ENCODE measurements at regions of chr1 and their contacts with region 1.

Region 1: GRCh38 chr1:198465201-198466144 is 75.0 kb downstream of the ATP6V1G3 start:
- DNase-seq: peak; percentile 79
- H3K4me3 Mint-ChIP-seq: no peak overlapping the region
- H3K27ac Mint-ChIP-seq: peak overlapping the region; percentile 74
- H3K4me1 Mint-ChIP-seq: peaks cover 32% of the 10 kb centered on the region
- H3K27me3 Mint-ChIP-seq: no peaks in the 10 kb centered on the region
- CTCF ChIP-seq: peak; percentile 84

Region 2: DNA sequence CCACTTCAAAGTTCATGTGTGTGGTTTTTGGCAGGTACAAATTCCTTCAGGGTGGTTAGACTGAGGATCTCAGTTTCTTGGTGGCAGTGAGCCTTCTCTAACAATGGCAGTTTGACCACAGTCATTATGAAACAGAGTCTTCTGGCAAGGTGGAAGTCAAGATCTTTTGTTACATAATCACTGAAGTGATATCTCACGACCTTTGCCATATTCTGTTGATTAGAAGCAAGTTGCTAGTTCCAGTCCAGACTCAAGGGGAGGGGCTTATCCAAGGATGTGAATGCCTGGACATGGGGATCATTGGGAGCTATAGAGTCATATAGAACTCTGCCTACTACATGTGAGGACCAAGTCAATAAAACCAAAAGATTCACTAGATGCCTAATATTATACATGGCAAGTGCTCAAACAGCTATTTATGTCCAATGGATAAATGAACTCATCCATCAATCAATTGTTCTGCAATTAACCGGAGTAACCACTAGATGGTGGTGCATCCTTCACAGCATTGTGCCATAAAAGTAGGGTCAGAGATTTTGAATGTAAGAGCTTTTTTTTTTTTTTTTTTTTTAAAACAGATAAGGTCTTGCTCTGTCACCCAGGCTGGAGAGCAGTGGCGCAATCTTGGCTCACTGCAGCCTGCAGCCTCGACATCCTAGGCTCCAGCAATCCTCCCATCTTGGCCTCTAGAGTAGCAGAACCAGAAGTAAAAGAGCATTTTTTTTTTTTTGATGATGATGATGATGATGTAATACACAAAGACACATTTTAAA is 1065.5 kb before region 1 on chr1:
- CTCF ChIA-PET with region 1: no interaction called
- POLR2A ChIA-PET with region 1: no interaction called
- intact Hi-C with region 1: loop called (anchors 5 kb)
- DNase-seq: peak; percentile 82
- H3K4me3 Mint-ChIP-seq: no peak overlapping the region
- H3K27ac Mint-ChIP-seq: no peak overlapping the region
- H3K4me1 Mint-ChIP-seq: no peaks in the 10 kb centered on the region
- H3K27me3 Mint-ChIP-seq: peaks cover 13% of the 10 kb centered on the region
- CTCF ChIP-seq: peak; percentile 63

Region 3: DNA sequence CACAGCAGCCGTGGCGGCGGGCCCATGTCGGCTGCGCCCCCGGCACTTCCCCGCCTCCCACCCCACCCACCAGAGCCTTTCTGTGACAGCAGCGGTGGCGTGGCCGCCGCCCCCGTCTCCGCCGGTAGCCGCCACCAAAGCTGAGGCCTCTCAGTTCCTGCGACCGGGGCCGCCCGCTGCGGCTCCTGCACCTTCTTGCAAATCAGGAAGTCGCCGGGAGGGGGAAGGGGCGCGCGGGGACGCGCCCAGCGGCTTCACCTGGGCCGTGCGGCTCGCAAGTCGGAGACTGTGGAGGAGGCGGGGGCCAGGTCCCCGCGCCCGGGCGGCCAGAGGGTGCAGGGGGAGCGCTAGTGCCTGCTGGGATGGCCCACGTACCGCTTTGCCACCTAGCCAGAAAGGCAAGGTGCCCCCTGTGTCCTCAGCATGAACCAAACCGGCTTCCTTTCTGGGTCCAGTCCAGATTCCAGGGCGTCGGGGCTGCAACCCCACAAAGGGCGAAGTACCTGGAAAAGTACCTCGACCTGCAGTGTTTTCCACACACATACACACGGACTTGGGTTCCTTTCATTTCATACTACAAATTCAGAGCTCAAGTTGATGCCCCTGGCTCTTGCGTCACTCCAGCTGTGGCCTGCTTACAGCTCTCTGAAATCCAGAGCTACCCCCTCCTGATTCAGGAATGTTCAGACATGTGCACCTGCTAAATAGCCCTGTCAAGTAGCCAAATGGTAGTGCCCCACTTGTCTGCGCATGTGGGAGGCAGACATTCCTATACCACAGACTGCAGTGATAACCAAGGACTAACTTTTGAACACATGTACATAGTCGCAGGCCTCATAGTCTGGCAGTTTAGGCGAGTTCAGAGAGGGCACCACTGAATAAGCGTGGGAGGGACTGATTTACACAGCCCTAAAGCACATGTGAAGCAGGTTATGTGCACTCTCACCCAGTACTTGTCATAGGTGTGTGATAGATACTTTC is 689.9 kb before region 1 on chr1 and contains the start of gene DENND1B:
- CTCF ChIA-PET with region 1: interaction called, 3 read pairs
- POLR2A ChIA-PET with region 1: no interaction called
- intact Hi-C with region 1: loop called (anchors 10 kb)
- DNase-seq: peak; percentile 84
- H3K4me3 Mint-ChIP-seq: peak within 1 kb of the TSS; percentile 67
- H3K27ac Mint-ChIP-seq: peak within 1 kb of the TSS; percentile 72
- H3K4me1 Mint-ChIP-seq: peaks cover 45% of the 10 kb centered on the region
- H3K27me3 Mint-ChIP-seq: no peaks in the 10 kb centered on the region
- CTCF ChIP-seq: no peak
- total RNA-seq, gene DENND1B: 19.2 and 20.9 TPM in 2 replicates

Region 4: GRCh38 chr1:198018529-198018928 is 446.9 kb before region 1 on chr1:
- CTCF ChIA-PET with region 1: no interaction called
- POLR2A ChIA-PET with region 1: no interaction called
- intact Hi-C with region 1: loop called (anchors 1 kb)
- DNase-seq: peak; percentile 98
- H3K4me3 Mint-ChIP-seq: no peak overlapping the region
- H3K27ac Mint-ChIP-seq: peak overlapping the region; percentile 40
- H3K4me1 Mint-ChIP-seq: peaks cover 15% of the 10 kb centered on the region
- H3K27me3 Mint-ChIP-seq: no peaks in the 10 kb centered on the region
- CTCF ChIP-seq: no peak

Region 5: DNA sequence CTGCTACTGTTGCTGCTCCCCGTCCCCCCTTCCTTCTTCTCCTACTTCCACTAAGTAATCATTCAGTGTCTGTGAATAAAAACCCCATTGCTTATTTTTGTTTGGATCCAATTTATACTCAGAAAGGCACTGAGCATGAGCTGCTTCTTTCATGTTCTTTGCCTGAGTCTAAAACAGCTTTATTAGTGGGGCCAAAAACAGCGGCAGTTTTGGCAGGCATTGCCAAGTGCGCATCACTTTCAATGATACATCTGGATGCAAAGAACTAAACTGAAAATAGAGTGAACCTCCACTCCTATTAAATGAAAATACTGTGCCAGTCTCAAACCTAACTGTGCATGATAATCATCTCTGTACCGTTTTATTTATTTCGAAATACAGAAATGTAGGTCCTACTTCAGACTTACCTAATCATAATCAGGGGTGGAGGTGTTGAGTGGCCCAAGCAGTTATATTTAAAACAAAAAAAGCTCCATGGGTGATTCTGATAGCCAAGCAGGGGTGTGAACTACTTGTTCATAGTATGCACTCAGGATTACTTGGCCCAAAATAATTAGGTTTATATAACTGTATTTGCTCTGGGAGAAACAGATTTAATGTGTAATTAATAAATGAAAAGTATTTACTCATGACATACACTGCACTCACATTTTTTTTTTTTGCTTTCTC is 260.3 kb before region 1 on chr1:
- CTCF ChIA-PET with region 1: interaction called, 3 read pairs
- POLR2A ChIA-PET with region 1: interaction called, 5 read pairs
- intact Hi-C with region 1: loop called (anchors 1 kb)
- DNase-seq: no peak
- H3K4me3 Mint-ChIP-seq: peak overlapping the region; percentile 20
- H3K27ac Mint-ChIP-seq: peak overlapping the region; percentile 79
- H3K4me1 Mint-ChIP-seq: peaks cover 21% of the 10 kb centered on the region
- H3K27me3 Mint-ChIP-seq: no peaks in the 10 kb centered on the region
- CTCF ChIP-seq: no peak

Region 6: DNA sequence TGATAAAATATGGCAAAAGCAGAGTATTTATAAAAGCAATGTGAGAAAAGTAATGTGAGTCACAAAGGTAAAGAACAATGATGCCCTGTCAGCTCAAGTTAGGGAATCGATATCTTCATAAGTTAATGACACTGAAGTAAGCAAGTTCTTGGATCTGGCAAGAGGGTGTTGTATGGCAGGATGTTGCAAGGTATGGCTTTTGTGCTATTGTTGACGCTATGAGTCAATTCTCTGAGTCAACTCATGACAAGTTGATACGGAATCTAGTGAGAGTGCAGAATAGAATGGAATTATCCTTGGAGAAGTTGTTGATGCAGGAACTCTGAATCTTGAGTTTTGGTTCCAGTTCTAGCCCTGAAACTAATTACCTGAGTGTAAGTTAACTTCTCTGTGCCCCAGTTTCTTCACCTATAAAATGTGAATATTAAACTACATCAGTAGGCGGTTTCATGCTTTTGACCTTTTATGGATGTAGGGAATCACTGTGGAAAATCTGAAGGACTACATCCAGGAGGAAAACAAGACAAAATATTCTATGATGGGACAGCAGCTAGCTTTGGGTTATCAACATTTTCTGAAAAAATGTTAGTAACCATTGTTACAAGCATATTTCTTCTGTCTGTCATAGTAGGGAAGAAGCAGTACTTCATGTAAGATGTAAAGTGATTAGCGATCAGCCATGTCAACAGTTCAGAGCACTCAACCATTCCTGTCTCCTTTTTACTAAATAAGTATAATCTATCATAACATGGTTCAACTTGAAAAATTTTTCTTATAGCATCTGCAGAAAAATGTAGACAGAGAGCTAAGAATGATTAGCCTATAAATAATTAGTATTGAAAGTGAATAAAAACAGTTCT is 21.9 kb before region 1 on chr1:
- CTCF ChIA-PET with region 1: no interaction called
- POLR2A ChIA-PET with region 1: interaction called, 33 read pairs
- intact Hi-C with region 1: no loop called
- DNase-seq: peak; percentile 99
- H3K4me3 Mint-ChIP-seq: peak overlapping the region; percentile 32
- H3K27ac Mint-ChIP-seq: peak overlapping the region; percentile 85
- H3K4me1 Mint-ChIP-seq: peaks cover 23% of the 10 kb centered on the region
- H3K27me3 Mint-ChIP-seq: no peaks in the 10 kb centered on the region
- CTCF ChIP-seq: no peak

Measured in MCF 10A (cell line).